CD4-positive, alpha-beta memory T cell (primary cell): ENCODE measurements at regions of chr1 and their contacts with region 1.

Region 1: GRCh38 chr1:208245185-208245705 is 1.1 kb upstream of the PLXNA2 start:
- DNase-seq: peak; percentile 65 to 76 (median 69)
- H3K4me3 ChIP-seq: peak overlapping the region; percentile 80 to 88
- H3K4me3 Mint-ChIP-seq: peak overlapping the region; percentile 83 to 93 (median 86)
- H3K27ac ChIP-seq: peak overlapping the region; percentile 50
- H3K27ac Mint-ChIP-seq: peak overlapping the region; percentile 29 to 91 (median 75)
- H3K4me1 ChIP-seq: peaks cover 15% of the 10 kb centered on the region
- H3K4me1 Mint-ChIP-seq: peaks cover 6 to 18% (median 8%) of the 10 kb centered on the region in 4 donors
- H3K27me3 ChIP-seq: peaks cover 13% of the 10 kb centered on the region
- H3K27me3 Mint-ChIP-seq: peaks cover 10 to 15% of the 10 kb centered on the region in 2 donors

Region 2: GRCh38 chr1:208029381-208030287 is 215.6 kb before region 1 on chr1:
- CTCF ChIA-PET with region 1: interaction called, 234 read pairs
- POLR2A ChIA-PET with region 1: no interaction called
- intact Hi-C with region 1: no loop called
- DNase-seq: no peak
- H3K4me3 ChIP-seq: no peak overlapping the region
- H3K4me3 Mint-ChIP-seq: no peak overlapping the region
- H3K27ac ChIP-seq: no peak overlapping the region
- H3K27ac Mint-ChIP-seq: no peak overlapping the region
- H3K4me1 ChIP-seq: no peaks in the 10 kb centered on the region
- H3K4me1 Mint-ChIP-seq: no peaks in the 10 kb centered on the region
- H3K27me3 ChIP-seq: no peaks in the 10 kb centered on the region
- H3K27me3 Mint-ChIP-seq: peaks cover 4 to 6% of the 10 kb centered on the region in 2 donors

Region 3: GRCh38 chr1:208132287-208132883 is 112.9 kb before region 1 on chr1:
- CTCF ChIA-PET with region 1: interaction called, 44 read pairs
- POLR2A ChIA-PET with region 1: interaction called, 11 read pairs
- intact Hi-C with region 1: loop called (anchors 1 kb)
- DNase-seq: peak in 4 of 5 donors; percentile 5 to 27 (median 20)
- H3K4me3 ChIP-seq: no peak overlapping the region
- H3K4me3 Mint-ChIP-seq: peak overlapping the region in 1 of 8 donors; percentile 27
- H3K27ac ChIP-seq: no peak overlapping the region
- H3K27ac Mint-ChIP-seq: no peak overlapping the region
- H3K4me1 ChIP-seq: peaks cover 5% of the 10 kb centered on the region
- H3K4me1 Mint-ChIP-seq: peaks cover 2 to 8% (median 6%) of the 10 kb centered on the region in 4 donors
- H3K27me3 ChIP-seq: no peaks in the 10 kb centered on the region
- H3K27me3 Mint-ChIP-seq: peaks cover 8 to 22% of the 10 kb centered on the region in 2 donors

Region 4: DNA sequence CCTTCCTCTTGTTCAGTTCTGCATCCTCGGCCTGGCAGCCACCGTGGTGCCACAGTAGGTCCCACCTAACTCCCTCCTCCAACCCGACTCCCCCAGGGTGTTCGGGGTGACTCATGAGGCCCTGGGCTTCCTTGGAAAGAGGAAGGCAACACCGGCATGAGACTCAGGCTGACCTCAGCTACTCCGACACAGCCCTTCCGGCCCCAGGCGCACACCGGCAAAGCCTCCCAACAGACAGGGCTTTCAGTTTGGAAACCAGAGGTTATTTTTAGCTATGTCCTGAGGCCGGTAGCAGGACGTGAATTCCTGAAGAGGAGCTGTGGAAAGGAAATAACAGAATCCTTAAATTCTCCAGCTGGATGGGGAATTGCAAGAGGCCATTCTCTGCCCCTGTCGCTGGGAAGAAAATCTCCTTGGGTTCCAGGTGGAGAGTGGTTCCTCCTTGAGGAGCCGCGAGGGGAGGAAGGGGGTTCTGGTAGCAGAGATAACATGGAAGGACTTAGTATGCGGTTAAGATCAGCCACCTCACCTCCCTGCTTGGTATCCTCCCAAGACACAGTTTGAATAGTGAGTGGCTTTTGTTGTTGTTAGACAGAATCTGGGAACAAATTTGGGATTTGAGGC is 25.5 kb before region 1 on chr1:
- CTCF ChIA-PET with region 1: interaction called, 12 read pairs
- POLR2A ChIA-PET with region 1: interaction called, 9 read pairs
- intact Hi-C with region 1: no loop called
- DNase-seq: no peak
- H3K4me3 ChIP-seq: no peak overlapping the region
- H3K4me3 Mint-ChIP-seq: no peak overlapping the region
- H3K27ac ChIP-seq: no peak overlapping the region
- H3K27ac Mint-ChIP-seq: no peak overlapping the region
- H3K4me1 ChIP-seq: no peaks in the 10 kb centered on the region
- H3K4me1 Mint-ChIP-seq: peaks cover 0 to 4% (median 0%) of the 10 kb centered on the region in 4 donors
- H3K27me3 ChIP-seq: no peaks in the 10 kb centered on the region
- H3K27me3 Mint-ChIP-seq: peaks cover 3 to 9% of the 10 kb centered on the region in 2 donors

Region 5: GRCh38 chr1:208233546-208233945 is 11.7 kb before region 1 on chr1:
- CTCF ChIA-PET with region 1: interaction called, 18 read pairs
- POLR2A ChIA-PET with region 1: interaction called, 7 read pairs
- intact Hi-C with region 1: no loop called
- DNase-seq: no peak
- H3K4me3 ChIP-seq: no peak overlapping the region
- H3K4me3 Mint-ChIP-seq: no peak overlapping the region
- H3K27ac ChIP-seq: no peak overlapping the region
- H3K27ac Mint-ChIP-seq: no peak overlapping the region
- H3K4me1 ChIP-seq: peaks cover 11% of the 10 kb centered on the region
- H3K4me1 Mint-ChIP-seq: peaks cover 5 to 16% (median 7%) of the 10 kb centered on the region in 4 donors
- H3K27me3 ChIP-seq: peaks cover 11% of the 10 kb centered on the region
- H3K27me3 Mint-ChIP-seq: peaks cover 20 to 30% of the 10 kb centered on the region in 2 donors